GM12878 (cell line): ENCODE measurements at regions of chr20 and their contacts with region 1.

Region 1: DNA sequence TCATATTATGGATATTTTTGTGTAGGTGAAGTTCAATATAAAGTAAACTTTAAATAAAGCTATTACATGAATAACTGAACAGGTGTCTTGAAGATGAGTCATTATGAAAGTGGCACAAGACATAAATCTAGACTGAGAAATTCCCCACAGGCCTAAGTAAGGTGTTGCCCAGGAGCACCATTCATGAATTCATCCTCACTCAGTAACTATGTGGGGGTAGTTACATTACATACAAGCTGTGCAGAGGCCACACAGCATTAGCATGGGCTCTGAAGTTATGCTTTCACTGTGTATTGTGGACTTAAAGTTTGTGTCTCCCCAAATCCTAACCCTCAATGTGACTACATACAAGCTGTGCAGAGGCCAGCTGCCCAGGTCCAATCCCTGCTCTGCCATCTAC is 65.9 kb downstream of the BCAS1 start:
- DNase-seq: peak; percentile 86
- ATAC-seq: peak; percentile 100
- H3K4me3 ChIP-seq: no peak overlapping the region
- H3K27ac ChIP-seq: peak overlapping the region; percentile 9; the same call in 1 of the 2 replicates
- H3K4me1 ChIP-seq: peaks cover 16% of the 10 kb centered on the region; the same call in 1 of the 2 replicates
- H3K27me3 ChIP-seq: no peaks in the 10 kb centered on the region
- CTCF ChIP-seq: no peak
- EP300 ChIP-seq: peak; percentile 58 to 78; a peak in 3 of 4 replicates
- POLR2A ChIP-seq: no peak
- RAD21 ChIP-seq: no peak

Region 2: GRCh38 chr20:53636540-53637097 is 367.8 kb before region 1 on chr20:
- CTCF ChIA-PET with region 1: no interaction called
- POLR2A ChIA-PET with region 1: interaction called, 10 read pairs
- RAD21 ChIA-PET with region 1: no interaction called
- SMC1A ChIA-PET with region 1: no interaction called
- in situ Hi-C with region 1: no loop called
- intact Hi-C with region 1: no loop called
- DNase-seq: no peak
- ATAC-seq: no peak
- H3K4me3 ChIP-seq: no peak overlapping the region
- H3K27ac ChIP-seq: no peak overlapping the region
- H3K4me1 ChIP-seq: peaks cover 5% of the 10 kb centered on the region; the same call in 1 of the 2 replicates
- H3K27me3 ChIP-seq: no peaks in the 10 kb centered on the region
- CTCF ChIP-seq: no peak
- EP300 ChIP-seq: no peak
- POLR2A ChIP-seq: no peak
- RAD21 ChIP-seq: no peak

Region 3: GRCh38 chr20:54123587-54124180 is 119.2 kb after region 1 on chr20:
- CTCF ChIA-PET with region 1: no interaction called
- POLR2A ChIA-PET with region 1: no interaction called
- RAD21 ChIA-PET with region 1: no interaction called
- SMC1A ChIA-PET with region 1: no interaction called
- in situ Hi-C with region 1: no loop called
- intact Hi-C with region 1: no loop called
- DNase-seq: no peak
- ATAC-seq: no peak
- H3K4me3 ChIP-seq: no peak overlapping the region
- H3K27ac ChIP-seq: no peak overlapping the region
- H3K4me1 ChIP-seq: no peaks in the 10 kb centered on the region
- H3K27me3 ChIP-seq: no peaks in the 10 kb centered on the region
- CTCF ChIP-seq: no peak
- EP300 ChIP-seq: no peak
- POLR2A ChIP-seq: no peak
- RAD21 ChIP-seq: no peak

Region 4: DNA sequence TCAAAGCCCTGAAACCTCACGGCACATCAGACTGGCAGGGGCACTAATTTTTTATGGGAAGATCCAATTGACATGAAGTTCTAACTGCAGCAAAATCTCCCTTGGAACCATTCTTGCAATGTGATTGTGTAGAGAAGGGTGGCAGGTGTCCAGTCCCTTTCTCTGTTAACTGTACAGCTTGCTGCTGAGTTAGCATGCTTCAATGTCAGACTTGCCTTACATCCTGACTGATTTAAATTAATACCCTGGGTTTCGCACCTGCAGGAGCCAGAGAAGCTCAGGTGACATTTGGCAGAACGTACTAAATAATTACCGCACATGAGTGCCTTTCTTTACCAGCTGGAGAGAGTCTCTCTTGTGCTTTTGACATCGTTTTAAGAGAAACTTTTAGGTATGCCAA is 593.9 kb after region 1 on chr20:
- CTCF ChIA-PET with region 1: no interaction called
- POLR2A ChIA-PET with region 1: no interaction called
- RAD21 ChIA-PET with region 1: no interaction called
- SMC1A ChIA-PET with region 1: no interaction called
- in situ Hi-C with region 1: no loop called
- intact Hi-C with region 1: no loop called
- DNase-seq: no peak
- ATAC-seq: no peak
- H3K4me3 ChIP-seq: no peak overlapping the region
- H3K27ac ChIP-seq: no peak overlapping the region
- H3K4me1 ChIP-seq: no peaks in the 10 kb centered on the region
- H3K27me3 ChIP-seq: no peaks in the 10 kb centered on the region
- CTCF ChIP-seq: no peak
- EP300 ChIP-seq: no peak
- POLR2A ChIP-seq: no peak
- RAD21 ChIP-seq: no peak